PC-9 (cell line): ENCODE measurements at regions of chr9 and their contacts with region 1.

Region 1: DNA sequence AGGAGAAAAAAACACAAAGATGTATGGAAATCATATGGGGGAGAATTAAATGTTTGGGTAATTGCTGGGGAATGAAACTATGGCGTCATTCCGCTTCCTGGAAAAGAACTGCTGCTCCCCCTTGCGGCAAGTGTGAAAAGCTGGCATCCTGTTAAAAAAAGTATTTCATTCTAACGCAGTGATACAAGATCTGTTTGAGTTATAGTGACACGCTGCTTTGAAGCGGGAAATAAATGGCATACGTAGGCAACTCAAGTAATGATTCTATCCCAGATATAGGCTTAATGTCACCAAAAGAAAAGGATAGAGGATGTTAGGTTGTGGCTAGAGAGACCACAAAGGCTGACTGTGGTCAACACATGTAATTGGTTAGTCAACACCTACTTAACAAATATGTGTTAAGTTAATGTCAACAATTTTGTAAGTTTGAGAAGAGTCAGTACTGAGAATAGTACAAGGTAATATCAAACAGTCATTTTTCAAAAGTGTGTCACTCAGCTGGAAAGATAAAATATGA is 70.2 kb upstream of the ALDH1A1 start:
- DNase-seq: peak; percentile 39 to 48
- H3K4me3 ChIP-seq: no peak overlapping the region
- H3K27ac ChIP-seq: no peak overlapping the region
- H3K4me1 ChIP-seq: no peaks in the 10 kb centered on the region
- H3K27me3 ChIP-seq: no peaks in the 10 kb centered on the region
- CTCF ChIP-seq: peak; percentile 64

Region 2: GRCh38 chr9:72280913-72281500 is 742.1 kb before region 1 on chr9:
- CTCF ChIA-PET with region 1: no interaction called
- POLR2A ChIA-PET with region 1: no interaction called
- intact Hi-C with region 1: loop called (anchors 2 kb)
- DNase-seq: peak; percentile 46 to 72
- H3K4me3 ChIP-seq: no peak overlapping the region
- H3K27ac ChIP-seq: no peak overlapping the region
- H3K4me1 ChIP-seq: no peaks in the 10 kb centered on the region
- H3K27me3 ChIP-seq: no peaks in the 10 kb centered on the region
- CTCF ChIP-seq: peak; percentile 96

Region 3: DNA sequence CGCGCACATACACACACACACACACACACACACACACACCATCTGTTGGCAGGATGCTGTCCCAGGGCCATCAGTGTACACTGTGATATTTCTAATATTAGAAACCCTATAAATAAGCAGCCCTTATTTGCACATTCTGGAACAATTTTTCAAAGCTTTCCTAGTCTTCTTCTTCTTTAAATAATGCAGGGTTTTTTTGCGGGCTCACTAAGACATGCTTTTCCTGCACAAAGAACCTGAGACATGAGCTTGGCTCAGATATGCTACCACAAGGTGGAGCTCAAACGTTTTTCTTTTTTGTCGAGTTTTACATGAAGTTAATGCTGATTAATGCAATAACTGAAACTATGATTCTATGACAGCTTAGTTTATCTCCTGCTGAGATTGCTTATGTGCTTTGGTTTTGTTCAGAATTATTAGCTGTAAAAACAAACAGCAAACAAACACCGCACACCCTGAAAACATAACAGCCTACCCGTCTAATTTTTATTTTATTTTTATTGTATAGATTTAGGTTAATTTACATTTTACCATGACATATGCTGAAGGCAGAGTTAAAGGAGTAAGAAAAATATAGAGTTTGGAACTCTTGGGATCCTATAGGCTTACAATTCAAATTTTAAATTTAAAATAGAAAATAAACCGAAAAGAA is 166.0 kb before region 1 on chr9:
- CTCF ChIA-PET with region 1: interaction called, 13 read pairs
- POLR2A ChIA-PET with region 1: interaction called, 3 read pairs
- intact Hi-C with region 1: loop called (anchors 1 kb)
- DNase-seq: peak; percentile 42 to 58
- H3K4me3 ChIP-seq: no peak overlapping the region
- H3K27ac ChIP-seq: peak overlapping the region; percentile 80
- H3K4me1 ChIP-seq: peaks cover 16% of the 10 kb centered on the region
- H3K27me3 ChIP-seq: no peaks in the 10 kb centered on the region
- CTCF ChIP-seq: peak; percentile 77

Region 4: GRCh38 chr9:72952914-72953313 is 70.2 kb before region 1 on chr9 and contains the start of gene ALDH1A1:
- CTCF ChIA-PET with region 1: no interaction called
- POLR2A ChIA-PET with region 1: no interaction called
- intact Hi-C with region 1: loop called (anchors 5 kb)
- DNase-seq: peak in 1 of 2 experiments; percentile 32
- H3K4me3 ChIP-seq: no peak within 1 kb of the TSS
- H3K27ac ChIP-seq: no peak within 1 kb of the TSS
- H3K4me1 ChIP-seq: peaks cover 11% of the 10 kb centered on the region; the same call in 1 of the 2 replicates
- H3K27me3 ChIP-seq: no peaks in the 10 kb centered on the region
- CTCF ChIP-seq: no peak
- total RNA-seq, gene ALDH1A1: 2.3 and 3.7 TPM in 2 replicates

Region 5: DNA sequence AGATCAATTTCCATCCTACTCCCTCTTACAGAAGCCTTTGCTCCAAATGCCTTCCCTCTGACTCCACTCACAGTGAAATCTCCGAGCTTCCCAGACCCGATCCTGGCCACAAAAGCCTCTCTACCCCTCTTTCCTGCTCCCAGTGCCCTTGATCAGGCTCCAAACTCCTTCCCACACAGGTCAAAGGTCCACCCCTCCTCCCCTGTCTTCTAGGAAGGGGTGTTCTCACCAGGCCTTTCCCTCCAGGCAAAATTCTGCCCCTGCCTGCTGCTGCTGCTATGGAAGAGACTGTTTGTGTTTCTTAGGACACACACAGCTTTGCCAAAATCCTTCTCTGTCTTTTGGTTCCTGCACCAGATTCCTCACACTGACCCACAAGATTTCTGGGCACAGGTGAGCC is 15.5 kb after region 1 on chr9:
- CTCF ChIA-PET with region 1: no interaction called
- POLR2A ChIA-PET with region 1: interaction called, 11 read pairs
- intact Hi-C with region 1: no loop called
- DNase-seq: peak; percentile 53 to 57
- H3K4me3 ChIP-seq: no peak overlapping the region
- H3K27ac ChIP-seq: no peak overlapping the region
- H3K4me1 ChIP-seq: peaks cover 30% of the 10 kb centered on the region
- H3K27me3 ChIP-seq: no peaks in the 10 kb centered on the region
- CTCF ChIP-seq: no peak